ENCODE measurements at regions of chr10 and their contacts with region 1.

Region 1: DNA sequence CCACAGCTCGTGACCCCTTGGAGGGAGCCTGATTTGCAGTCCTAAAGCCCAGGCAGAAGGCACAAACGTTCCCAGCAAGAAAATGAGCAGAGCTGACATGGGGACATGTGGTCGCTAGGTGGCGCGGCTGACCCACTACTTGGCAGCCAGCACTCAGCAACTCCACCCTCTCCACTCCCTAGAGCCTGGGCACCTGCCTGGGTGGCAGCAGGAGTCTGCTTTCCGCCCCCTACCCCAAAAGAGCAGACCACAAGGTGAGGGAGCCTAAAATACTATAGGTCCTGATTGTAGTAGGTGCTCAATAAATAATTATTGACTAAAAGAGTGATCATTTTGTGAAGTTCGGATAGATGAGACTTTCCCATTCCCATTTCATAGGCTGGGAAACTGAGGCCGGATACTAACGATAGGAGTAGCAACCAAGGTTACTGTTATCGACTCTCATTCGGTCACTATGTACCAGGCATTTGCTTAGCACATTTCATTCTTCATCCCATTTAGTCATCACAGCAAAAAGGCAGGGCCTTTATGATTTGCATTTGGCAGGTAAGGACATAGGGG is 57.4 kb downstream of the NEUROG3 start:
- DNase-seq: peak; percentile 63 to 90
- H3K4me3 ChIP-seq: no peak overlapping the region
- H3K27ac ChIP-seq: no peak overlapping the region
- H3K4me1 ChIP-seq: peaks cover 0 to 2% (median 0%) of the 10 kb centered on the region in 4 experiments; a peak in 2 of 7 replicates
- H3K27me3 ChIP-seq: no peaks in the 10 kb centered on the region
- CTCF ChIP-seq: peak; percentile 96 to 98 (median 97)
- EP300 ChIP-seq: no peak
- POLR2A ChIP-seq: no peak
- RAD21 ChIP-seq: peak; percentile 98 to 99

Region 2: GRCh38 chr10:69451209-69451783 is 64.5 kb before region 1 on chr10 and contains the start of gene TSPAN15:
- CTCF ChIA-PET with region 1: interaction called, 74 read pairs
- POLR2A ChIA-PET with region 1: no interaction called
- DNase-seq: peak; percentile 88 to 91
- H3K4me3 ChIP-seq: peak within 1 kb of the TSS; percentile 56 to 91 (median 62)
- H3K27ac ChIP-seq: no peak within 1 kb of the TSS
- H3K4me1 ChIP-seq: peaks cover 0 to 10% (median 4%) of the 10 kb centered on the region in 4 experiments; a peak in 5 of 7 replicates
- H3K27me3 ChIP-seq: peaks cover 8 to 26% (median 16%) of the 10 kb centered on the region in 4 experiments
- CTCF ChIP-seq: no peak
- EP300 ChIP-seq: no peak
- POLR2A ChIP-seq: no peak
- RAD21 ChIP-seq: no peak
- total RNA-seq, gene TSPAN15: 9.7 and 11.6 TPM in 2 replicates

Region 3: DNA sequence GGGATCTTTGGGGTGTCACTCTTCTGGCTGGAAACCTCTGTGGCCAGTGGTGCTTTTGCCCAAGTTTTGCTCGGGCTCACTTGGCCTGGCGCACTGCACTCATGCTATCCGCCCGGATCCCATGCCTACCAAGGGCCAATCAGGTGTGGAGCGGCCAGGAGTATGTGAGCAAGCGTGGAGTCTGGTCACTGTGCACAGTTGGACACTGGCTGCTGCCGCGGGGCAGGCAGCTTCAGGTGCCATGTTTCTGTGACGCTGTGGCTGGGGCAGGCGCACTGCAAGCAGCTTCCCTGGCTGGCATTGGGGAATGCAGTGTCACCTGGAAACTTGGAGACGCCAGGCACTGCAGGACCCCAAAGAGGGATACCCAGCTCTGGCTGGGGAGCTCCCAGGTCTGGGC is 12.2 kb after region 1 on chr10:
- CTCF ChIA-PET with region 1: interaction called, 53 read pairs
- POLR2A ChIA-PET with region 1: no interaction called
- DNase-seq: no peak
- H3K4me3 ChIP-seq: no peak overlapping the region
- H3K27ac ChIP-seq: no peak overlapping the region
- H3K4me1 ChIP-seq: no peaks in the 10 kb centered on the region; a peak in 1 of 7 replicates
- H3K27me3 ChIP-seq: peaks cover 0 to 2% (median 0%) of the 10 kb centered on the region in 4 experiments; a peak in 1 of 7 replicates
- CTCF ChIP-seq: no peak
- EP300 ChIP-seq: no peak
- POLR2A ChIP-seq: no peak
- RAD21 ChIP-seq: no peak

Region 4: GRCh38 chr10:69558559-69558958 is 42.8 kb after region 1 on chr10:
- CTCF ChIA-PET with region 1: interaction called, 18 read pairs
- POLR2A ChIA-PET with region 1: no interaction called
- DNase-seq: no peak
- H3K4me3 ChIP-seq: no peak overlapping the region
- H3K27ac ChIP-seq: no peak overlapping the region
- H3K4me1 ChIP-seq: peaks cover 0 to 7% (median under 1%) of the 10 kb centered on the region in 4 experiments; a peak in 4 of 7 replicates
- H3K27me3 ChIP-seq: peaks cover 0 to 6% (median under 1%) of the 10 kb centered on the region in 4 experiments; a peak in 4 of 7 replicates
- CTCF ChIP-seq: no peak
- EP300 ChIP-seq: no peak
- POLR2A ChIP-seq: no peak
- RAD21 ChIP-seq: no peak

Region 5: DNA sequence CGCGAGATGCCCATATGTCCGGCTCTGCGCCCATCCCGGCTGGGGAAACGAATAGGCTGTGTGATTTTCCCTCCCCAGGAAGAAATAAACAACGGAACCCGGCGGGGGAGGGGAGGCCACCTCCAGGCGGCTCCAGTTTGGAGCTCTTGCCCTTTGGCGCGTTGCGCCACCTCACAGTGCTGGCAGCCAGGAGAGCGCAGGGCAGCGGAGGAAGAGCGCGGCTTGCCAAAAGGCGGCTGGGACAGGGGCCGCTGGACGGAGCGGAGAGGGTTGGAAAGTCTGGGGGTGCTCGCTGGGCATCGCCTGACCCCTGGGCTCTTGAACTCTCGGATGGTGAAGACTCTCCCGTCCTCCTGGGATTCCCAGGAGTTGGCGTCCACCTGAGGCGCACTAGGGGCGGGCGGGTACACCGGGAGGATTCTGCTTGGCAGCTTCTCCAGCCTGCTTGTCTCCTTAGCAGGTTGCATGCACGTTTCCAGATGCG is 62.8 kb after region 1 on chr10:
- CTCF ChIA-PET with region 1: interaction called, 76 read pairs
- POLR2A ChIA-PET with region 1: interaction called, 6 read pairs
- DNase-seq: peak in 1 of 2 experiments; percentile 60
- H3K4me3 ChIP-seq: peak overlapping the region; percentile 14 to 62 (median 24); a peak in 5 of 8 replicates
- H3K27ac ChIP-seq: no peak overlapping the region
- H3K4me1 ChIP-seq: peaks cover 7 to 41% (median 24%) of the 10 kb centered on the region in 4 experiments
- H3K27me3 ChIP-seq: peaks cover 70 to 90% (median 84%) of the 10 kb centered on the region in 4 experiments
- CTCF ChIP-seq: no peak
- EP300 ChIP-seq: no peak
- POLR2A ChIP-seq: no peak
- RAD21 ChIP-seq: no peak

Region 6: DNA sequence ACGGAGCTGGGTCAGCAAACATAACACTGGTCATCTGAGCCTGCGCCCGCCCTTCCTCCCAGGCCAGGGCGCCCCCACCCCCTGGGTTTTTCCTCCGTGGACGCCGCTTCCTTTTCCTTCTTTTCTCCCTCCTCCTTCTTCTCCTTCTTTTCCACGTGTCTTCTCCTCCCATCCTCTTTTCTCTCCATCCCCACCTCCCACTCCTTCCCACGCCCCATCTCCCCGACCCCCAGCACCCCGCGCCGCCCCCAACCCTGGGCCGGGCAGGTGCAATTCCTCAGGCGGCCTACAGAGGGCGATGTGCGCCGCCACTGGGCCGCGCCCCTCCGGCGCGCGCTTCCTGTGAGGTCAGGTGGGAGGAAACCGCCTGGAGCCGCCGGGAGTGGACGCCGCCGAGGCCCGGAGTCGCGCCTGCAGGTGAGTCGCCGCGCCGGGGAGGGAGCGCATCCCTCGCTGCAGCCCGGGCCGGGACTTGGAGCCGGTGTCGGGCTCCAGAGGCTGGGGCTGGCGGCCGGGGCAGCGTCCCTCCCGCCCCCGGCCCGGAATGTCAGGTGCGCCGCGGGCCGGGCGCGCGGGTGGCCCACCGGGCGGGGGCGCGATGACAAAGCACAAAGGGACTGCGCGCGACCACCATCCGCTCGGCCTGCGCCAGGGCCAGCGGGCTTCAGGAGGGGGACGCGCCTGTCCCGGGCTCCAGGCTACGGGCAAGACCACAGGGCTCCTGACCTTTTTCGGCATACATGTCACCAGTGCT is 114.3 kb after region 1 on chr10 and contains the start of gene FAM241B:
- CTCF ChIA-PET with region 1: interaction called, 1,068 read pairs
- POLR2A ChIA-PET with region 1: interaction called, 59 read pairs
- DNase-seq: peak in 1 of 2 experiments; percentile 95
- H3K4me3 ChIP-seq: peak within 1 kb of the TSS; percentile 53 to 81 (median 79)
- H3K27ac ChIP-seq: no peak within 1 kb of the TSS; the same call in 1 of the 2 replicates
- H3K4me1 ChIP-seq: peaks cover 0 to 7% (median 5%) of the 10 kb centered on the region in 4 experiments; a peak in 5 of 7 replicates
- H3K27me3 ChIP-seq: peaks cover 0 to 9% (median 4%) of the 10 kb centered on the region in 4 experiments; a peak in 4 of 7 replicates
- CTCF ChIP-seq: peak; percentile 62 to 90 (median 83)
- EP300 ChIP-seq: 0 out of 3 replicates have a peak, but pooled peaks of 1 of the 2 experiments have one; percentile 38
- POLR2A ChIP-seq: peak in 1 of 2 experiments; percentile 71; a peak in 2 of 3 replicates
- RAD21 ChIP-seq: peak; percentile 47 to 56
- total RNA-seq, gene FAM241B: 18.6 and 19.3 TPM in 2 replicates

Region 7: DNA sequence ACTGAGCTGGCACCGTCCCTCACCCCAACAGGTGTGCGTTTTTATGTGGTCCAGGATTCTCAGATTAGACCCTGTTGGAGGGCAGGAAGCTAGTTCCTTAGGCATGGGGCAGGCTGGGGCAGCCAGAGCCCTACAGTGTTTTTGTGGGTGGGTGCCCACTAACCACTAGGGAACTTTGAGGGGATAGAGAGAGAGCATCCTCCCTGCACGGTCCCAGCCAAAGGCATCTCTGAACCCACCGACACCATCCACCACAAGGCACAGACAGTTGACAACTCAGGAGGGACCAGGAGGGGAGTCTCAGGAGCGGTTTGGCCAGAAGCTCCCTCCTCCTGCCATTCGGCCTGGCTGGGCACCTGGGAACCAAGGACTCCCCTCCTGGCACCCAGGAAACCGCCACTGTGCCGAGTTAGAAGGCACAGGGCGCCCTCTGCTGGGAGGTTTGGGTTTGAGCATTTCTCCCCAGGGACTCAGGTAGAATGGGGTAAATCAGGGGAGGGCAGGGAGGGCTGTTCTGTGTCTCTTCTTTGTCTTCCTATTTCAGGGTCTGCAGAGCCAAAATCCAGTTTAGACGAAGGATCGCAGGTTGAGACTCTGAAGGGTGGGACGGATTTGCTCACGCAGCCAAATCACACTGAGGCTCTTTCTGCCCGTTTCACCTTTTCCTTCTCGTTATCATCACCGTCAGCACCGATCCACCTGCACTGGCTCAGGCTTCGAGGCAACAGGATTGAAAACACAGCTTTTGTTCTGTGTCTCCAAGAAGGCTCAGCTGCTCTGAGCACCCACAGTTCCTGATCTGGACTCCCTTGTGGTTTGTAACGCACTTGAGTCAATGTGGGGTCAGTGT is 201.2 kb after region 1 on chr10:
- CTCF ChIA-PET with region 1: interaction called, 39 read pairs
- POLR2A ChIA-PET with region 1: no interaction called
- DNase-seq: peak; percentile 46 to 93
- H3K4me3 ChIP-seq: no peak overlapping the region
- H3K27ac ChIP-seq: no peak overlapping the region
- H3K4me1 ChIP-seq: peaks cover 0 to 2% (median under 1%) of the 10 kb centered on the region in 4 experiments; a peak in 3 of 7 replicates
- H3K27me3 ChIP-seq: no peaks in the 10 kb centered on the region
- CTCF ChIP-seq: peak; percentile 81 to 98 (median 89)
- EP300 ChIP-seq: no peak
- POLR2A ChIP-seq: no peak
- RAD21 ChIP-seq: peak; percentile 96 to 99